PC-3 (cell line): ENCODE measurements at regions of chr4 and their contacts with region 1.

Region 1: DNA sequence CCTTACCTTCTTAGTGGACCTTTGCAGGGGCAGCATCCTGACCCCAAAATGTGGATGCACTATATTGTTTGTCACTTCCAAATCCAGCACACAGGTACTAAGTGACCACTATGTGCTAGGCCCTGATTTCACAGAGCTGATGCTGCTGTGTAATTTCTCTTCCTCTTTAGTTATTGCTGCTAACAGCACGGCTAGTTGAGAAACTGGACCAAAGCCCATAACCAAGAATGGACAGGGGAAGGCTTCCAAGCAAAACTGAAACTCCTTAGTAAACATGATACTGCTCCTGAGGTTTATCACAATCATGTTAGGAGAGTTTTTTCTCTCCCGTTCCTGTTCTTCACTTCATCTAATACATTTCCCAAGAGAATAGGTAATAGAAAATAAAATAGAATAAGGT is 172.9 kb upstream of the TTC29 start:
- DNase-seq: no peak
- ATAC-seq: no peak
- H3K4me3 ChIP-seq: no peak overlapping the region
- H3K27ac ChIP-seq: no peak overlapping the region
- H3K4me1 ChIP-seq: no peaks in the 10 kb centered on the region
- H3K27me3 ChIP-seq: no peaks in the 10 kb centered on the region
- CTCF ChIP-seq: no peak

Region 2: DNA sequence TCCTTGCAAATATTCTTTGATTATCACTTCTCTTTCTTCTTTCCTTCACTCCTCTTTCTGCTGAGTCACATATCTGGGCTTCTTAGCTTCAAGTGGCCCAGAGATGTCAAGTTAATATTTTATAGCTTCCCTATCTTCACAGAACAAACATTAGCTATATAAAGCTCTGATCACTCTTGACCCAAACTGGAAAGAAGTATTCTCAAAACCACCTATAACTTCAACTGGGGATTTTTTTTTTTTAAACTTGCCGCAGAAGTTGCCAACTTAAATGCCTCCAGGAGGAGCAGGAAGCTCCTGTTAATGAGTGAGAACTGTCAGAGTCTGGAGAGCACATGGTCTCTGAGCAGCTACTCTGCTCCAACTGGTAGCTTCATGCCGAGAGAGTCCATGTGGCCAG is 129.1 kb after region 1 on chr4:
- CTCF ChIA-PET with region 1: no interaction called
- POLR2A ChIA-PET with region 1: no interaction called
- intact Hi-C with region 1: loop called (anchors 5 kb)
- DNase-seq: peak; percentile 18
- ATAC-seq: peak; percentile 72
- H3K4me3 ChIP-seq: no peak overlapping the region
- H3K27ac ChIP-seq: no peak overlapping the region
- H3K4me1 ChIP-seq: peaks cover 7% of the 10 kb centered on the region; the same call in 1 of the 2 replicates
- H3K27me3 ChIP-seq: no peaks in the 10 kb centered on the region
- CTCF ChIP-seq: no peak